ENCODE measurements at regions of chr5 and their contacts with region 1.

Region 1: DNA sequence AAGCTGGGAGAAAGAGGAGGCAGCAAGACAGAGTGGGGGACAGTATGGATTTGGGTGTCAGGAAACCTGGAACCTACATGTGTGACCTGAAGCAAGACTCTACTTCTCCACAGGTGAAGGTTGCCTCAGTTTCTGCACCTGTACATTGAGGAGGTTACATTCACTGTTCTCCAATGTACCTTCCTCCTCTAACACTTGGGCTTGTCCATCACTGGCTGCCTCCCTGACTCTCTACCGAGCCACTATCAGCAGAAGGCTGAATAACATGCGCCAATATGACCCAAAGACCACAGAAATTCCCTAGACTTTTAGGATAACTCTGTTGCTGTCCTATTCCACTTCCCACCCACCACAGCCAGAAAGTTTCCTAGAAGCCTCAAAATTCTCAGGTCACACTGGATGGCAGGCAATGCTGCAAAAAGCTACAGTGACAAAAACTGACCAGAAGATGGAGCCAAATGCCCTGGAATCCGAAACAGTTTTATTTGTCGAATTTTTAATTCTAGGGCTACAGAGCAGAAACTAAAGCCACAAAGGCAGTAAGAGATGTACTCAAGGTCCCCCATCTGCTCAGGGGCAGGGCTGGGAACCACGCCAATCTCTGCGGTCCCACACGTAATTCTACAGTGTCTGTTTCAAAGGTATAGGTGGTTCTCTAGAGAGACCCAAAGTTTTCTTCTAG is 64.4 kb downstream of the FAM114A2 start:
- DNase-seq: peak in 5 of 14 experiments; percentile 10 to 62 (median 40)
- ATAC-seq: peak; percentile 49
- H3K4me3 ChIP-seq: no peak overlapping the region
- H3K4me3 Mint-ChIP-seq: no peak overlapping the region
- H3K27ac ChIP-seq: no peak overlapping the region
- H3K27ac Mint-ChIP-seq: no peak overlapping the region
- H3K4me1 ChIP-seq: peaks cover 3% of the 10 kb centered on the region
- H3K4me1 Mint-ChIP-seq: no peaks in the 10 kb centered on the region
- H3K27me3 ChIP-seq: peaks cover 0 to 5% of the 10 kb centered on the region in 2 experiments
- H3K27me3 Mint-ChIP-seq: peaks cover 12% of the 10 kb centered on the region
- CTCF ChIP-seq: peak; percentile 69

Region 2: DNA sequence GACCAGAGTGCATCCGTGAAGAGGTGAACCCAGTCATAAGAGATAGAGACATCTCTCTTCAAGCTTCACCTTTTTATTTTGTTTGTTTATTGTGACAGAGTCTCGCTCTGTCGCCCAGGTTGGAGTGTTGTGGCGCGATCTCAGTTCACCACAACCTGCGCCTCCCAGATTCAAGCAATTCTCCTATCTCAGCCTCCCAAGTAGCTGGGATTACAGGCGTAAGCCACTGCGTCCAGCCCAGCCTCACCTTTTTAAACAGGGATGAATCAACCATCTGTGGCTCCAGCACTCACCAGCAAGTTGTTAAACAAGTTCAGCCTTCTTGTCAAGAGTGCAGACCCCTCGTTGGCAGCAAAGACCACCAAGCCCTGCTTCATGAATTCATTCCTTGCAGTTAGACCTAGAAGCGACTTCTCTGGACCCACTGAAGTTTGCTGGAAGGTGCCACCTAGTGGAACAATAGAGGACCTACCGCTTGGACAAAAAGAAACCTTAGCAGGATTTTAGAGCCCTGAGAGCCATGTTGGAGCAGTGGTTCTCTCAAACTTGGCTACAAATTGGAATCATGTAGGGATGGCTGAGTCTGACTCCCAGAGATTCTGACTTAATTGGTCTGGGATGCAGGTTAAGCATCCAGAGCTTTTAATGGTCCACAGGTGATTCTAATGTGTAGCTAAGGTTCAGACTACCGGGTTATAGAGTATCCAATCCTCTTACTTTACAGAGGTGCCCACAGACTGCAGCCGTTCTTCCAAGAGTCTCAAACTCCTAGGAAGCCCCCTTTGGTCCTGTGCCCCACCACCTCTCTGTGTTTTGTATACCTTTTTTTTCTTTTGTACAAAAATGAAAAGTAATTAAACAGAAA is 205.8 kb after region 1 on chr5:
- CTCF ChIA-PET with region 1: no interaction called
- POLR2A ChIA-PET with region 1: no interaction called
- intact Hi-C with region 1: loop called in 1 of 2 experiments (anchors 1 kb)
- DNase-seq: peak in 9 of 14 experiments; percentile 12 to 73 (median 38)
- ATAC-seq: peak; percentile 96
- H3K4me3 ChIP-seq: no peak overlapping the region
- H3K4me3 Mint-ChIP-seq: no peak overlapping the region
- H3K27ac ChIP-seq: no peak overlapping the region
- H3K27ac Mint-ChIP-seq: no peak overlapping the region
- H3K4me1 ChIP-seq: peaks cover 7% of the 10 kb centered on the region
- H3K4me1 Mint-ChIP-seq: no peaks in the 10 kb centered on the region
- H3K27me3 ChIP-seq: no peaks in the 10 kb centered on the region
- H3K27me3 Mint-ChIP-seq: peaks cover 4% of the 10 kb centered on the region
- CTCF ChIP-seq: peak; percentile 72

Region 3: DNA sequence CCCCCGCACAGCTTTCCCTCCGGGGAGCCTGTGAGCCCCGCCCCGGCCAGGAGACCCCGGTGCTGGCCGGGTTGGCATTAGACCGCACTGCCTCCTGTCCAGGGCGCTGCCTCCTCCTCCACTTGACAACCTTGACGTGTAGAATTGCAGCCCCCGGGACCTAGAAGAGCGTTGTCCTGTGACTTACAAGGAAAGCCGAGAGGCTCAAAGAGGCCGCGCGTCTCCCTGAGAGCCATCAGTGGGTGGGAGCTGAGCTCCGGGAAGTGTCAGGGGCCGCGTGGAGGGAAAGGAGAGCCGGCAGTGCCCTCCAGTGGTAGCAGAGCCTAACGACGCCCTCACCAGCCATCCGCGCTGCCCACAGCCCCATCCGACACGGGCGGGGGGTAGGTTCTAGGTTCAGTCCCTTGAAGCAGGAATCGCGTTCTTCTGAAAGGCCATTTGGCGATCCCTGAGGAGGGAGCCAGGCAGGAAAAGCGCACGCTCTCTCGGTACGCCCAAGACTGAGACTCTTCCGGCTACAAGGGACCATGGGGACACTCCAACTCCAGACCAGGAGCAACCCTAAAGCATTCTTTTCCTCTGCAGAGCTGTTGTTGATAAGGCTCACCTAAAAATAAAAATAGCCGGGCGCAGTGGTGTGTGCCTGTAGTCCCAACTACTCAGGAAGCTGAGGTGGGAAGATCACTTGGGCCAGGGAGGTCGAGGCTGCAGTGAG is 431.0 kb after region 1 on chr5:
- CTCF ChIA-PET with region 1: interaction called, 18 read pairs
- POLR2A ChIA-PET with region 1: no interaction called
- intact Hi-C with region 1: loop called (anchors 1 to 2 kb)
- DNase-seq: peak; percentile 49 to 80 (median 60)
- ATAC-seq: peak; percentile 99
- H3K4me3 ChIP-seq: peak overlapping the region; percentile 27
- H3K4me3 Mint-ChIP-seq: peak overlapping the region; percentile 54
- H3K27ac ChIP-seq: no peak overlapping the region
- H3K27ac Mint-ChIP-seq: no peak overlapping the region
- H3K4me1 ChIP-seq: peaks cover 9% of the 10 kb centered on the region
- H3K4me1 Mint-ChIP-seq: peaks cover 14% of the 10 kb centered on the region
- H3K27me3 ChIP-seq: no peaks in the 10 kb centered on the region
- H3K27me3 Mint-ChIP-seq: no peaks in the 10 kb centered on the region
- CTCF ChIP-seq: peak; percentile 85

Region 4: GRCh38 chr5:154630410-154630809 is 656.1 kb after region 1 on chr5:
- CTCF ChIA-PET with region 1: no interaction called
- POLR2A ChIA-PET with region 1: no interaction called
- intact Hi-C with region 1: loop called in 1 of 2 experiments (anchors 10 kb)
- DNase-seq: no peak
- ATAC-seq: no peak
- H3K4me3 ChIP-seq: no peak overlapping the region
- H3K4me3 Mint-ChIP-seq: no peak overlapping the region
- H3K27ac ChIP-seq: no peak overlapping the region
- H3K27ac Mint-ChIP-seq: no peak overlapping the region
- H3K4me1 ChIP-seq: no peaks in the 10 kb centered on the region
- H3K4me1 Mint-ChIP-seq: no peaks in the 10 kb centered on the region
- H3K27me3 ChIP-seq: no peaks in the 10 kb centered on the region
- H3K27me3 Mint-ChIP-seq: peaks cover 7% of the 10 kb centered on the region
- CTCF ChIP-seq: no peak